Caco-2 (cell line): ENCODE measurements at regions of chr11 and their contacts with region 1.

Region 1: GRCh38 chr11:119999220-119999619 is 138.7 kb downstream of the TRIM29 start:
- DNase-seq: peak in 1 of 2 experiments; percentile 52
- H3K4me3 ChIP-seq: no peak overlapping the region
- H3K4me3 Mint-ChIP-seq: no peak overlapping the region
- H3K27ac Mint-ChIP-seq: no peak overlapping the region
- H3K4me1 ChIP-seq: no peaks in the 10 kb centered on the region
- H3K4me1 Mint-ChIP-seq: no peaks in the 10 kb centered on the region
- H3K27me3 ChIP-seq: no peaks in the 10 kb centered on the region
- H3K27me3 Mint-ChIP-seq: peaks cover 9% of the 10 kb centered on the region
- CTCF ChIP-seq: peak; percentile 46 to 68

Region 2: DNA sequence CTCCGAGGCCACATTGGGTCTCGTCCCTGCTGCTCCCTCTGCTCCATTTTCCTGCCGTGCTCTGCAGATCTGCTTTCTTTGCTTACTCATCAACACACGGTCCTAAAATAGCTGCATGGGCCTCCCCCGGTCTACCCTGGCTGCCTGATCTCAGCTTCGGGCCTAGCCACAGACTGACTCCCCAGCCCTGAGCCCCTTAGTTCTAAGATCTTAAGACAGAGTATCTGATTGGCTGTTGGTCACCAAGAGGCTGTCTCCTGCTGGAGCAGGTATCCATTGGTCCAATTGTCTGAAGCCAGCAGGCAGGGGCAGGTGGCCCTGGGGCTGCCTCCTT is 216.5 kb before region 1 on chr11:
- CTCF ChIA-PET with region 1: no interaction called
- POLR2A ChIA-PET with region 1: no interaction called
- intact Hi-C with region 1: loop called (anchors 10 kb)
- DNase-seq: no peak
- H3K4me3 ChIP-seq: no peak overlapping the region
- H3K4me3 Mint-ChIP-seq: no peak overlapping the region
- H3K27ac Mint-ChIP-seq: no peak overlapping the region
- H3K4me1 ChIP-seq: no peaks in the 10 kb centered on the region
- H3K4me1 Mint-ChIP-seq: no peaks in the 10 kb centered on the region
- H3K27me3 ChIP-seq: no peaks in the 10 kb centered on the region; the same call in 1 of the 2 replicates
- H3K27me3 Mint-ChIP-seq: peaks cover 7% of the 10 kb centered on the region
- CTCF ChIP-seq: no peak

Region 3: DNA sequence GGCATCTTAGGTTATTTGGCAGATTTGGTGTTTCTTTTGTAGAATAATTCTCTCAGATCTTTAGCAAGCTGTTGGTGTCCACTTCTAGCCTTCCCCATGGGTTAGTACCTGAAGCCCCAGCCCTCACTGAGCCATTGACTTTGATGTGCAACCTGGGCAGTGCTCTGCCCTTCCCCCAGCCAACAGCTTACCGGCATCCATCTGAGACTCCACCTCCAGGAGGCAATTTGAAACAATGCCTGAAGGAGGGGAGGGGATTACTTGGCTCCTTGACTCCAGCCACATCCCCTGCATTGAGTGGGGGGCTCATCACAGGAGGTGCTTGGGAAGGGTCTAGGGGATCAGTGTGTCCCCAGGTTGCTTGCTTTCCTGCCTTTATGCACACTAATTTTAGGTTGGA is 23.9 kb after region 1 on chr11:
- CTCF ChIA-PET with region 1: no interaction called
- POLR2A ChIA-PET with region 1: no interaction called
- intact Hi-C with region 1: no loop called
- DNase-seq: no peak
- H3K4me3 ChIP-seq: no peak overlapping the region
- H3K4me3 Mint-ChIP-seq: no peak overlapping the region
- H3K27ac Mint-ChIP-seq: no peak overlapping the region
- H3K4me1 ChIP-seq: no peaks in the 10 kb centered on the region
- H3K4me1 Mint-ChIP-seq: peaks cover 7% of the 10 kb centered on the region
- H3K27me3 ChIP-seq: no peaks in the 10 kb centered on the region
- H3K27me3 Mint-ChIP-seq: peaks cover 8% of the 10 kb centered on the region
- CTCF ChIP-seq: no peak